HCT116 (cell line): ENCODE measurements at regions of chr2 and their contacts with region 1.

Region 1: DNA sequence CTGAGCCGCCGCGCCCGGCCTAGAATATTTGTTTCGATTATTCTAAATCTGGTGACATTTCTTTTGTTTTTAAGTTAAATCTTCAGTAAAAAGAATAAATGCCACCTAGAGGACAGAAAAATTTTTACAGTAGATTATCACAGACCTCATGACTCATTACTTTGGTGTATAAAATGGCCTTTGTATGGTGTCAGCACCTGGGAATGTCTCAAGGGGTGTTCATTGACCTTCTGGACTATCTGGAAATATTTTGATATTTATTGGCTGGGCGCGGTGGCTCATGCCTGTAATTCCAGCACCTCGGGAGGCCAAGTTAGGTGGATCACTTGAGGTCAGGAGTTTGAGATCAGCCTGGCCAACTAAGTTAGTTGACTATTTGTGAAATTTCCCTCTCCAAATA is 30.3 kb upstream of the SLC30A6 start:
- DNase-seq: peak; percentile 79
- ATAC-seq: peak; percentile 96
- H3K4me3 ChIP-seq: peak overlapping the region in 1 of 2 experiments; percentile 16; a peak in 2 of 4 replicates
- H3K27ac ChIP-seq: peak overlapping the region; percentile 49; the same call in 1 of the 2 replicates
- H3K4me1 ChIP-seq: peaks cover 3 to 23% of the 10 kb centered on the region in 2 experiments; a peak in 3 of 4 replicates
- H3K27me3 ChIP-seq: no peaks in the 10 kb centered on the region
- CTCF ChIP-seq: peak; percentile 20 to 47 (median 23); a peak in 4 of 6 replicates
- POLR2A ChIP-seq: no peak
- RAD21 ChIP-seq: peak; percentile 54

Region 2: GRCh38 chr2:32856891-32857290 is 721.5 kb after region 1 on chr2:
- CTCF ChIA-PET with region 1: no interaction called
- POLR2A ChIA-PET with region 1: no interaction called
- RAD21 ChIA-PET with region 1: no interaction called
- intact Hi-C with region 1: loop called (anchors 5 kb)
- DNase-seq: no peak
- ATAC-seq: no peak
- H3K4me3 ChIP-seq: no peak overlapping the region
- H3K27ac ChIP-seq: no peak overlapping the region
- H3K4me1 ChIP-seq: no peaks in the 10 kb centered on the region
- H3K27me3 ChIP-seq: no peaks in the 10 kb centered on the region
- CTCF ChIP-seq: no peak
- POLR2A ChIP-seq: no peak
- RAD21 ChIP-seq: no peak